ENCODE measurements at regions of chr1 and their contacts with region 1.

Region 1: GRCh38 chr1:7752512-7753417 is 18.3 kb upstream of the VAMP3 start:
- DNase-seq: peak; percentile 70
- ATAC-seq: peak; percentile 60
- H3K4me3 Mint-ChIP-seq: peak overlapping the region; percentile 47
- H3K27ac Mint-ChIP-seq: no peak overlapping the region
- H3K4me1 Mint-ChIP-seq: peaks cover 29% of the 10 kb centered on the region
- H3K27me3 Mint-ChIP-seq: peaks cover 10% of the 10 kb centered on the region
- CTCF ChIP-seq: peak; percentile 88

Region 2: DNA sequence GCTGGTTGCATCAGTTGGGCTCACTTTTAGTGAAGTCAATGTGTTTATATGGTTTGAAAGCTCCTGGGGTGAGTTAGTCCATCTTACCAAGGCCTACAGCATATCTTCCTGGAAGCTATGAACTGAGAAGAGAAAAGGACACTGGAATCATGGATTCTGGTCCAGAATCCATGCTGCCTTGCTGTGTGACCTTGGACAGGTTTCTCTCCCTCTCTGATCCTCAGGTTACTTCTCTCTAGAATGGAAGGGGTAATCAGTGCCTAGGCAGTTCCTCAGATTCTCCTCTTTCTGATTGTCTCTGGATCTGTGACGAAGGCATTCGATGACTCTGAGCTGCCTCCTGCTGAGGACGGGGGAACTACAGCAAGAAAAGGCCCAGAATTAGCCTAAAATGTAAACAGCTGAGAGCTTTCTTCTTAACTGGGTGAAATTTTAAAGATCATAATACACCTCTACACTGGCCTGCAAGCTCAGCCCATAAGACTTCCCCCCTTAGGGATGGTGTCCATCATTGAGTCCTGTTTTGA is 406.6 kb before region 1 on chr1:
- CTCF ChIA-PET with region 1: no interaction called
- POLR2A ChIA-PET with region 1: no interaction called
- intact Hi-C with region 1: no loop called
- DNase-seq: no peak
- ATAC-seq: no peak
- H3K4me3 Mint-ChIP-seq: no peak overlapping the region
- H3K27ac Mint-ChIP-seq: no peak overlapping the region
- H3K4me1 Mint-ChIP-seq: no peaks in the 10 kb centered on the region
- H3K27me3 Mint-ChIP-seq: no peaks in the 10 kb centered on the region
- CTCF ChIP-seq: no peak

Region 3: GRCh38 chr1:7656557-7657215 is 96.1 kb before region 1 on chr1:
- CTCF ChIA-PET with region 1: interaction called, 12 read pairs
- POLR2A ChIA-PET with region 1: no interaction called
- intact Hi-C with region 1: no loop called
- DNase-seq: no peak
- ATAC-seq: no peak
- H3K4me3 Mint-ChIP-seq: no peak overlapping the region
- H3K27ac Mint-ChIP-seq: no peak overlapping the region
- H3K4me1 Mint-ChIP-seq: no peaks in the 10 kb centered on the region
- H3K27me3 Mint-ChIP-seq: no peaks in the 10 kb centered on the region
- CTCF ChIP-seq: no peak

Region 4: GRCh38 chr1:7698641-7699040 is 54.1 kb before region 1 on chr1:
- CTCF ChIA-PET with region 1: interaction called, 23 read pairs
- POLR2A ChIA-PET with region 1: no interaction called
- intact Hi-C with region 1: no loop called
- DNase-seq: no peak
- ATAC-seq: peak; percentile 45
- H3K4me3 Mint-ChIP-seq: no peak overlapping the region
- H3K27ac Mint-ChIP-seq: no peak overlapping the region
- H3K4me1 Mint-ChIP-seq: peaks cover 9% of the 10 kb centered on the region
- H3K27me3 Mint-ChIP-seq: peaks cover 24% of the 10 kb centered on the region
- CTCF ChIP-seq: no peak

Region 5: GRCh38 chr1:7710859-7711258 is 41.9 kb before region 1 on chr1:
- CTCF ChIA-PET with region 1: interaction called, 10 read pairs
- POLR2A ChIA-PET with region 1: no interaction called
- intact Hi-C with region 1: no loop called
- DNase-seq: no peak
- ATAC-seq: no peak
- H3K4me3 Mint-ChIP-seq: no peak overlapping the region
- H3K27ac Mint-ChIP-seq: no peak overlapping the region
- H3K4me1 Mint-ChIP-seq: peaks cover 4% of the 10 kb centered on the region
- H3K27me3 Mint-ChIP-seq: peaks cover 35% of the 10 kb centered on the region
- CTCF ChIP-seq: no peak

Region 6: GRCh38 chr1:7733276-7733675 is 19.5 kb before region 1 on chr1:
- CTCF ChIA-PET with region 1: interaction called, 24 read pairs
- POLR2A ChIA-PET with region 1: interaction called, 3 read pairs
- intact Hi-C with region 1: no loop called
- DNase-seq: no peak
- ATAC-seq: no peak
- H3K4me3 Mint-ChIP-seq: no peak overlapping the region
- H3K27ac Mint-ChIP-seq: no peak overlapping the region
- H3K4me1 Mint-ChIP-seq: no peaks in the 10 kb centered on the region
- H3K27me3 Mint-ChIP-seq: peaks cover 8% of the 10 kb centered on the region
- CTCF ChIP-seq: no peak

Region 7: GRCh38 chr1:7773901-7774300 is 21.1 kb after region 1 on chr1:
- CTCF ChIA-PET with region 1: interaction called, 24 read pairs
- POLR2A ChIA-PET with region 1: interaction called, 4 read pairs
- intact Hi-C with region 1: no loop called
- DNase-seq: no peak
- ATAC-seq: no peak
- H3K4me3 Mint-ChIP-seq: no peak overlapping the region
- H3K27ac Mint-ChIP-seq: no peak overlapping the region
- H3K4me1 Mint-ChIP-seq: peaks cover 32% of the 10 kb centered on the region
- H3K27me3 Mint-ChIP-seq: peaks cover 6% of the 10 kb centered on the region
- CTCF ChIP-seq: no peak